Ascending aorta (tissue), 2 donors: ENCODE measurements at regions of chr12 and their contacts with region 1.

Region 1: DNA sequence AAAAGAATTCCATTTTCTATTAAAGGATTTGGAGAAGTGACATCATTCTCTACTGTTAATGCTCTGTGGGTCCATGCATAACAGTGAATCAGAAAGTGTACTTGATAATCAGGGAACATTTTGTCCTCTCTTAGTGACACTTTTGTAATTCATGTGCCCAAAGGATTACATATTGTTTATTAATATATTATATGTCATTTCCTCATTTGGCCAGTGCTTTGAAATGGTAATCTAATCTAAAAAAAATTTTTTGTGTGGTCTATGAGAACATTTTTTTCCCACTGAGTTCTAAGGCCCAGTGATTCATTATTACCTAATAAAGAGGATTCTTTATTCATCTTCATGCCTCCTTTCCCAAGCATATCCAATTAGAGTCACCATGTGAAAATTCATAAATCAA is 79.7 kb upstream of the MYF6 start:
- DNase-seq: no peak
- H3K4me3 ChIP-seq: no peak overlapping the region
- H3K27ac ChIP-seq: peak overlapping the region in 1 of 2 donors; percentile 59
- H3K4me1 ChIP-seq: peaks cover 0 to 11% of the 10 kb centered on the region in 2 donors
- H3K27me3 ChIP-seq: no peaks in the 10 kb centered on the region
- CTCF ChIP-seq: no peak

Region 2: GRCh38 chr12:80551897-80552296 is 75.9 kb before region 1 on chr12:
- intact Hi-C with region 1: loop called (anchors 2 kb)
- DNase-seq: no peak
- H3K4me3 ChIP-seq: no peak overlapping the region
- H3K27ac ChIP-seq: peak overlapping the region in 1 of 2 donors; percentile 19
- H3K4me1 ChIP-seq: peaks cover 3 to 8% of the 10 kb centered on the region in 2 donors
- H3K27me3 ChIP-seq: no peaks in the 10 kb centered on the region
- CTCF ChIP-seq: no peak

Region 3: DNA sequence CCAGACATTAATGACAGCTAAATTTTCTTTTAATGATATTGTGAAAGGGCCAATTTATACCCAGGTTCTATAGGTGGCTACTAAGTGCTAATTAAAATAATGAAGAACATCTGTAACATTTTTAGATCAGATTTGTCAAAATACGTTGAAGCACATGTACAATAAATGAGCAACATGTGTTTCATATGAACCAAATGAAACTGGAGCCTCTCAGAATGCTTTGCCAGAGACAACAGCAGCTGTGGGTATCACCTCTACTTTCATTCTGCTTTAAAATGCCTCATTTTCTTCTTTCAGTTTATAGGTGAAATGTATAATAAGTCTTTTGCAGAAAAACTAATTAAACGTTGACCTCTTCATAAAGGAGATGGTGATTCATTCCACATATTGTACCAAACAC is 53.5 kb after region 1 on chr12:
- intact Hi-C with region 1: no loop called
- DNase-seq: no peak
- H3K4me3 ChIP-seq: no peak overlapping the region
- H3K27ac ChIP-seq: no peak overlapping the region
- H3K4me1 ChIP-seq: no peaks in the 10 kb centered on the region
- H3K27me3 ChIP-seq: no peaks in the 10 kb centered on the region
- CTCF ChIP-seq: no peak

Region 4: DNA sequence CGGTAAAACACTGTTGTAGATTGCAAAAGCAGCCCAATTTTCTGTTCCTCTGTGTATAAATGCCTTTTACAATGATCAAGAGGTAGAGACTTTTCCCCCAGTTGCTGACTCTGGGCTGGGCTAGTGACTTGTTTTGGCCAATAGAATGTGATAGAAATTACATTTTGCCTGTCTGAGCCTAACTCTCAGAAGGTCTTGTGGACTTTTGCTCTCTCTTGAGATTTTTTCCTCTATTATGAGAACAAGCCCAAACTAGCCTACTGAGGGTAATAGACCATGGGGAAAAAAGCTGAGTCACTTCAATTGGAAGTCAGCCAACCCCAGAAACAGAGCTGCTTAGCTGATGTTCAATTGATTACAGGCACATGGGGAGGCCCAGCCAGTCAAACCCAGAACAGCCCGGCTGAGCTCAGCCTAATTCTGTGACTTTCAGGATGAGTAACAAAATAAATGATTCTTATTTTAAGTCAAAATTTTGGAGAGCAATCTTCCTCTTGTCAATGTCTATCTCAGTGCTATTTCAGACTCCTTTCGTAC is 150.3 kb after region 1 on chr12:
- intact Hi-C with region 1: loop called (anchors 5 kb)
- DNase-seq: peak in 1 of 2 donors; percentile 79
- H3K4me3 ChIP-seq: no peak overlapping the region
- H3K27ac ChIP-seq: peak overlapping the region; percentile 79 to 85
- H3K4me1 ChIP-seq: peaks cover 0 to 18% of the 10 kb centered on the region in 2 donors
- H3K27me3 ChIP-seq: no peaks in the 10 kb centered on the region
- CTCF ChIP-seq: no peak